Caco-2 (cell line): ENCODE measurements at regions of chr14 and their contacts with region 1.

Region 1: GRCh38 chr14:21233457-21234076 is 35.7 kb downstream of the HNRNPC start:
- DNase-seq: peak in 1 of 2 experiments; percentile 35
- H3K4me3 ChIP-seq: no peak overlapping the region
- H3K4me3 Mint-ChIP-seq: no peak overlapping the region
- H3K27ac Mint-ChIP-seq: no peak overlapping the region
- H3K4me1 ChIP-seq: 0 out of 2 replicates have a peak, but pooled peaks cover 7% of the 10 kb centered on the region
- H3K4me1 Mint-ChIP-seq: peaks cover 16% of the 10 kb centered on the region
- H3K27me3 ChIP-seq: no peaks in the 10 kb centered on the region
- H3K27me3 Mint-ChIP-seq: no peaks in the 10 kb centered on the region
- CTCF ChIP-seq: peak; percentile 12 to 34

Region 2: DNA sequence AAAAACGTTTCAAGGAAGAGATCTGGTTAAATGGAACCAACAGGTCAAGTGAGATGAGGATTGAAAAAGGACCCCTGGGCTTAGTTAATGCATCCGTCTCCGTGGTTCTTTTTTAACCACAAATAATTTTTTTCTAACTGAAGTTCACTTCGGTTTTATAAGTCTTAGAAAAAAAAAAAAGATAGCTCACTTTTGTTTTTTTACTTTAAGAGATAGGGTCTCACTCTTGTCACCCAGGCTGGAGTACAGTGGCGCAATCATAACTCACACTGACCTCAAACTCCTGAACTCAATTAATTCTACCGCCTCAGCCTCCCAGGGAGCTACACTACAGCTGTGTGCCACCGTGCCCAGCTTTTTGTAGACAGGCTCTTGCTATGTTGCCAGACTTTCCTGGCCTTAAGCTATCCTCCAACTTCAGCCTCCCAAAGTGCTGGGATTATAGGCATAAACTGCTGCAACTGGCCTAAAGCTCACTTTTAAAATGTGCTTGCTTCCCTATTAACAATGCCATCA is 23.9 kb after region 1 on chr14:
- CTCF ChIA-PET with region 1: no interaction called
- POLR2A ChIA-PET with region 1: interaction called, 14 read pairs
- intact Hi-C with region 1: no loop called
- DNase-seq: no peak
- H3K4me3 ChIP-seq: no peak overlapping the region
- H3K4me3 Mint-ChIP-seq: no peak overlapping the region
- H3K27ac Mint-ChIP-seq: no peak overlapping the region
- H3K4me1 ChIP-seq: 0 out of 2 replicates have a peak, but pooled peaks cover 5% of the 10 kb centered on the region
- H3K4me1 Mint-ChIP-seq: peaks cover 20% of the 10 kb centered on the region
- H3K27me3 ChIP-seq: no peaks in the 10 kb centered on the region
- H3K27me3 Mint-ChIP-seq: no peaks in the 10 kb centered on the region
- CTCF ChIP-seq: no peak

Region 3: DNA sequence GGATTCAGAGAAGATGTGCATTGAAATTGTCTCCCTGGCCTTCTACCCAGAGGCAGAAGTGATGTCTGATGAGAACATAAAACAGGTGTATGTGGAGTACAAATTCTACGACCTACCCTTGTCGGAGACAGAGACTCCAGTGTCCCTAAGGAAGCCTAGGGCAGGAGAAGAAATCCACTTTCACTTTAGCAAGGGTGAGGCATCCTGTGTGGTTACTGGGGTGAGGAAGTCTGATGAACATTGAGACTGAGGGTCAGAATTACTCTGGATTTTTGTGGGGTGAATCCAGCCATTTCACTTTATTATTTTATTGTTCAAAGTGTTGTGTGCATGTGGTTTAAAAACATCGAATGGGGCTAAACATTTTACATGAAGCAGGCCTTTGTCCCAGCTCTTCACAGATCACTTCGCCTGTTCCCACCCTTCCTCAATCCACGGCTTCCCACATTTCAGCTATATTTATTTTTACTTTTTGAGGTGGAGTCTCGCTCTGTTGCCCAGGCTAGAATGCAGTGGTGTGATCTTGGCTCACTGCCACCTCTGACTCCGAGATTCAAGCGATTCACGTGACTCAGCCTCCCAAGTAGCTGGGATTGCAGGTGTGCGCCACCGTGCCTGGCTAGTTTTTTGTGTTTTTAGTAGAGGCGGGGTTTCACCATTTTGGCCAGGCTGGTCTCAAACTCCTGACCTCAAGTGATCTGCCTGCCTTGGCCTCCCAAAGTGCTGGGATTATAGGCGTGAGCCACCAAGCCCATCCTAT is 109.6 kb after region 1 on chr14:
- CTCF ChIA-PET with region 1: no interaction called
- POLR2A ChIA-PET with region 1: no interaction called
- intact Hi-C with region 1: no loop called
- DNase-seq: no peak
- H3K4me3 ChIP-seq: no peak overlapping the region
- H3K4me3 Mint-ChIP-seq: no peak overlapping the region
- H3K27ac Mint-ChIP-seq: no peak overlapping the region
- H3K4me1 ChIP-seq: no peaks in the 10 kb centered on the region
- H3K4me1 Mint-ChIP-seq: no peaks in the 10 kb centered on the region
- H3K27me3 ChIP-seq: no peaks in the 10 kb centered on the region
- H3K27me3 Mint-ChIP-seq: peaks cover 3% of the 10 kb centered on the region
- CTCF ChIP-seq: no peak

Region 4: DNA sequence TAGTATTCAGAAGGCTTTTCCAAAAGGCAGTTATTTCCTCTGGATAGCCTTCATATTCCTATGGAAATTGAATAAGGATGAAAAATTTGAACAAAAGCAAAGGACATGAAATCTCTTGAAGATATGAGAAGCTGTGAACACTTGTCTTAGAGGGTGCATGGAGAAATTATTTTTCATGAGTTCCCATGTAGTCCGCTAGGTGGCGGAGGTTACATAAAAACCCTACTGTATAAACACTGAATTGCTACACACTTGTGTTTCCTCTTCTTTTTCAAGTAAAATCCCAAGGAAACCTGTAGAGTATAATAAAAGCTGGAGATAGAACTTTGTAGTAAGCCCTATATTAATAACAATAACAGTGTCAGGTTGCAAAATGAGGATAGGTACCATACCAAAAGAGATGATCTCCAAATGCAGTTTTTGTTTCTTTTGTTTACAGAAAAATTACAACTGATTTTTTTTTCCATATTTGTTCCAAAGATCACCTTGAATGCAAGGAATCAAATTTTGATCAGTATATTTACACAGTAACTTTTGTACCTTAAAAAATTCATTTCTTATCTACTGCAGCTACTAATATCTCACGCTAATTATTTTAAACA is 477.9 kb after region 1 on chr14:
- CTCF ChIA-PET with region 1: no interaction called
- POLR2A ChIA-PET with region 1: no interaction called
- intact Hi-C with region 1: no loop called
- DNase-seq: peak in 1 of 2 experiments; percentile 37
- H3K4me3 ChIP-seq: no peak overlapping the region
- H3K4me3 Mint-ChIP-seq: no peak overlapping the region
- H3K27ac Mint-ChIP-seq: no peak overlapping the region
- H3K4me1 ChIP-seq: peaks cover 9% of the 10 kb centered on the region; the same call in 1 of the 2 replicates
- H3K4me1 Mint-ChIP-seq: no peaks in the 10 kb centered on the region
- H3K27me3 ChIP-seq: no peaks in the 10 kb centered on the region
- H3K27me3 Mint-ChIP-seq: peaks cover 3% of the 10 kb centered on the region
- CTCF ChIP-seq: peak; percentile 82 to 87